HEK293T (cell line): ENCODE measurements at regions of chr11 and their contacts with region 1.

Region 1: GRCh38 chr11:65382033-65382807 is at the start of gene SLC25A45:
- DNase-seq: peak; percentile 78

Region 2: GRCh38 chr11:64834723-64835620 is 547.2 kb before region 1 on chr11:
- CTCF ChIA-PET with region 1: no interaction called
- POLR2A ChIA-PET with region 1: no interaction called
- DNase-seq: no peak

Region 3: GRCh38 chr11:65477149-65477965 is 95.1 kb after region 1 on chr11:
- CTCF ChIA-PET with region 1: no interaction called
- POLR2A ChIA-PET with region 1: interaction called, 14 read pairs
- DNase-seq: peak; percentile 91